Left colon (tissue), 2 donors: ENCODE measurements at regions of chr13 and their contacts with region 1.

Region 1: GRCh38 chr13:46553886-46554858 is 1.2 kb downstream of the LRCH1 start:
- DNase-seq: peak; percentile 75 to 79
- ATAC-seq: peak; percentile 70

Region 2: DNA sequence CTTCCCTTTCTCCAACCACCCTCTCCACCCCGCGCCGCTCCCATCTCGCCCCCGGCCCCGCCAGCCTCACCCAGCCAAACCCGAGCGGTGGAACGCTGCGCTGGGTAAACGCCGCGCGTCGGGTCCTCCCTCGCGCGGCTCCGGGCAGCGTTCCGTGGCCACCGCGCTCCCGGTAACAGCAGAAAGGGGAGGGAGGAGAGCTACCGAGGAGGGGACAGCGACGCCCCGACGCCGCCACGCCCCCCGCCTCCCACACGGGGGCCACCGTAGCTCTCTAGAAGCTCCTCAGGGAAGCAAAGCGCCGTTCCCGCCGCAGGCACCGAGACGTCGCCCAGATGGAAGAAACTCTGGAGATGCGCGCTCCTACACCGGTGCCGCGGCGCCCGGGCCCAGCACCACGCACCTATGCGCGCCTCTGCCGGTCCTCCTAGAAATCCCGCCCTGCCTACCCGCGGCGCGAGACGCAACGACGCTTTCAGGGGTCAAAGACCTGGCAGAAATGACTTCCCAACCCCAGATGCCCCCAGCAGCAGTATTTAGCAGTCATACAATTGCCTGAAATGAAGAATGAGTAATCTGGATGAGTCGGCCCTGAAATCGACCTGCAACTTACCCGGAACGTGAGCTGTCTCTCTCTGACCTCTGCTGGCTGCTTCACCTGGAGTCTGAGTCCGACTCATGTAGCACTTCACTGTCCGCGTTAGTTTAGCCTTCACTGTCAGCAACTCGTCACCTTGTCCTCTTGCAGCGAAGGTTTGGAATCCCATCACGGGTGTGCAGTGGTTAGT is 166.9 kb before region 1 on chr13 and contains the start of gene RUBCNL:
- intact Hi-C with region 1: no loop called
- DNase-seq: peak; percentile 75 to 78
- ATAC-seq: peak; percentile 69
- total RNA-seq, gene RUBCNL: 14.9 to 28.4 TPM

Region 3: GRCh38 chr13:46614582-46614981 is 60.4 kb after region 1 on chr13:
- intact Hi-C with region 1: loop called in 1 of 2 experiments (anchors 10 kb)
- DNase-seq: no peak
- ATAC-seq: no peak

Region 4: GRCh38 chr13:46655377-46656180 is 101.4 kb after region 1 on chr13:
- intact Hi-C with region 1: loop called in 1 of 2 experiments (anchors 10 kb)
- DNase-seq: no peak
- ATAC-seq: peak; percentile 63

Region 5: GRCh38 chr13:46721054-46721453 is 166.9 kb after region 1 on chr13:
- intact Hi-C with region 1: loop called in 1 of 2 experiments (anchors 2 kb)
- DNase-seq: peak in 1 of 2 donors; percentile 64
- ATAC-seq: peak; percentile 61

Region 6: GRCh38 chr13:46804391-46804815 is 250.2 kb after region 1 on chr13:
- intact Hi-C with region 1: no loop called
- DNase-seq: no peak
- ATAC-seq: no peak

Region 7: DNA sequence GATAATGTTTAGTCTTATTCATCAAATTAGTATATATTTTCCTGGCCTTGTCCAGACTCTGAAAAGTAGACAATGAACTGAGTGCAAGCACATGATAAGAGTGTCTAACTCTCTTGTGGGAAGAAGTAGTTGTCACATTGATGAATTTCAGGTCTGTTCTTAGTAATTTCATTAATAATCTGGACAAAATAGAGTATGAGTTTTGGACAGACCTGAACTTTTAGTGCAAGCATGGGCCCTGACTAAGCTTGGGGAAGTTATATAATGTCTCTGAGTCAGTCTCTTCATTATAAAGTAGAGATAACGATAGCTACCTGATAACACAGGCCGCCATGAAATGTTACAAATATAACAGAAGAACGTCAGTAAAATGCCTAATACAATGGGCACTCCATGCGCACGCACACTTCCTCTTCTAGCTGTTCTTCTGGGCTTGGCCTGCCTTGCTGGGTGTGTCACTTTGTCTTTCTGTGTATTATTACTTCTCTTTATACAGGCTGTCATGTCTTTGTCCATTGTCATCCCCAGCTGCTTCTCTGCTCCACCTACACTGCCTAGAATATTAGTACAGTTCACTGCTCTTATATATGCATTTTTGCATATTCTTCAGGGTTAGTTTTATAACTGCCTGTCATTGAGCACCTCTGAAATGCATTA is 471.7 kb after region 1 on chr13:
- intact Hi-C with region 1: no loop called
- DNase-seq: no peak
- ATAC-seq: no peak